ENCODE measurements at regions of chr18 and their contacts with region 1.

Region 1: GRCh38 chr18:35497370-35498197 is at the start of gene INO80C:
- DNase-seq: peak; percentile 79 to 97 (median 84)

Region 2: GRCh38 chr18:35407871-35408481 is 89.6 kb before region 1 on chr18:
- intact Hi-C with region 1: loop called (anchors 5 kb)
- DNase-seq: peak in 1 of 10 donors; percentile 37